HEK293T (cell line): ENCODE measurements at regions of chr11 and their contacts with region 1.

Region 1: GRCh38 chr11:76799066-76799804 is 16.1 kb downstream of the TSKU start:
- DNase-seq: peak; percentile 88

Region 2: DNA sequence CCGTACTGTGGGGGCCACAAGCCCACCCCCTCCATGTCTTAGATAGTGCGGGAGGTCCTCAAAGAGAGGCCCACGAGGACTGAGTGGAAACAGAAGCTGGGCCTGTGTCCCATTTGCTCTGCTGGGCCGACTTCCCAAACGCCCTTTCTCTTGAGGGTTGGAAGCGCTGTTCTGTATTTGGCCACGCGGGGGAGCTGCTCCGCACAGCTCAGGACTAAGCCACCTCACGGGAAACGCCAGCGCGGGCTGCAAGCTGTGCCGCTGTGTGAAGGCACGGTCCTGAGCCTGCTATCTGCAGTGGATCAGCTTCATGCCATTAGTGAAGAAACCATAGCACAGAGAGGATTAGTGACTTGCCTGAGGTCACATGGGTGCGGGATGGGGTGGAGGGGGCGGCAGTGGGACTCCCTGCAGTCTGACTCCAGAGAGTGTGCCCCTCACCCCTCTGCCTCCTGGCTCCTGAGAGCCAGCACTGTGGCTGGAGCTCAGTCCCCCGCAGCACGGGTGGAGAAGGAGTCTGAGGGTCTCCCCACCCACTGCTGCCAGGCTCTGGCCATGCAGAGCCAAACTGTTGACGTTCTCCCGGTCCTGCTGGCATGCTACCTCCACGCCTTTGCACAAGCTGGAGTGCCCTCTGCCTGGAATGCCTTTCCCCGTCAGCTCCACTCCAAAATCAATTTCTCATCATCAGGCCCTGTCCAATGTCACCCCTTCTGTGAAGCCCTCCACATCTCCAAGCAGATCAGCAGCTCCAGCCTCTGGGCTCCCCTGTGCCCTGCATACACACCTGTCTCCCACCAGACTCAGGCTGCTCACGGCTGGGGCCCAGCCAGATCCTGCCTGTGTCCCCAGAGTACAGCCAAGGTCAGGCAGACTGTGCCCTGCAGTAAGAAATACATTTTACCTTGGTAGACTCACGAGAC is 77.2 kb before region 1 on chr11:
- CTCF ChIA-PET with region 1: interaction called, 16 read pairs
- POLR2A ChIA-PET with region 1: no interaction called
- DNase-seq: peak; percentile 85

Region 3: GRCh38 chr11:76768088-76768908 is 30.9 kb before region 1 on chr11:
- CTCF ChIA-PET with region 1: no interaction called
- POLR2A ChIA-PET with region 1: no interaction called
- DNase-seq: no peak